Activated naive CD4-positive, alpha-beta T cell treated with anti-CD3 and anti-CD28 coated beads for 36 hours (primary cell): ENCODE measurements at regions of chr17 and their contacts with region 1.

Region 1: GRCh38 chr17:18141210-18141803 is 32.8 kb downstream of the MYO15A start:
- DNase-seq: peak; percentile 64
- H3K4me3 Mint-ChIP-seq: no peak overlapping the region
- H3K27ac Mint-ChIP-seq: no peak overlapping the region
- H3K4me1 Mint-ChIP-seq: no peaks in the 10 kb centered on the region
- H3K27me3 Mint-ChIP-seq: no peaks in the 10 kb centered on the region

Region 2: DNA sequence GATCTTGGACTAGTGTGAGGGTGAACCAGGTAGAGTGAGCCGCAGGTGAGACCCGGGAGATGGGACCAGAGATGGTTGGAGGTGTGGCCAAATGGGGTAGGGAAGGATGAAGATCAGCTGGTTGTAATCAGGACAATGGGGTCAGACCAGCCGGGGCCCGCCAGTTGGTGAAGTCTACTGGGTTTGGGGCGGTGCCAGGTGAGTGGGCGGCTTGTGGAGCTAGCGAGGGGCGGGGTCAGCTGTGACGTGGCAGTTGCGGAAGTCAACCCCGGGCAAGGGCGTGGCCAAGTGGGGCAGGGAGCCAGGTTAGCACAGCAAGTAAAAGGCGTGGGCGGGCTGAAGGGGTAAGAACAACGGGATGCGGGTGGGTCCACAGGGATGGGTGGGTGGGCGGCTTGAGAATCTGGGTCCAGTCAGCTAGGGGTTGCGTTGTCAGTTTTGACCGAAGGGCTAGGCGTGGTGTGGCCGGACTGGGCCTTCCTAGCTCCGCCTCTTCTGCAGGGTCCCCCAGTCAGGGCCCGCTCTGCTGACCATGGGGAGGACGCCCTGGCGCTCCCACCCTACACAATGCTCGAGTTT is 16.8 kb after region 1 on chr17:
- CTCF ChIA-PET with region 1: interaction called, 17 read pairs
- intact Hi-C with region 1: no loop called
- DNase-seq: peak; percentile 98
- H3K4me3 Mint-ChIP-seq: peak overlapping the region; percentile 70
- H3K27ac Mint-ChIP-seq: peak overlapping the region; percentile 47
- H3K4me1 Mint-ChIP-seq: peaks cover 13% of the 10 kb centered on the region
- H3K27me3 Mint-ChIP-seq: no peaks in the 10 kb centered on the region

Region 3: GRCh38 chr17:18217412-18218015 is 76.2 kb after region 1 on chr17:
- CTCF ChIA-PET with region 1: interaction called, 7 read pairs
- intact Hi-C with region 1: loop called (anchors 1 kb)
- DNase-seq: peak; percentile 87
- H3K4me3 Mint-ChIP-seq: no peak overlapping the region
- H3K27ac Mint-ChIP-seq: no peak overlapping the region
- H3K4me1 Mint-ChIP-seq: no peaks in the 10 kb centered on the region
- H3K27me3 Mint-ChIP-seq: no peaks in the 10 kb centered on the region